Posterior vena cava (tissue), 2 donors: ENCODE measurements at regions of chr9 and their contacts with region 1.

Region 1: DNA sequence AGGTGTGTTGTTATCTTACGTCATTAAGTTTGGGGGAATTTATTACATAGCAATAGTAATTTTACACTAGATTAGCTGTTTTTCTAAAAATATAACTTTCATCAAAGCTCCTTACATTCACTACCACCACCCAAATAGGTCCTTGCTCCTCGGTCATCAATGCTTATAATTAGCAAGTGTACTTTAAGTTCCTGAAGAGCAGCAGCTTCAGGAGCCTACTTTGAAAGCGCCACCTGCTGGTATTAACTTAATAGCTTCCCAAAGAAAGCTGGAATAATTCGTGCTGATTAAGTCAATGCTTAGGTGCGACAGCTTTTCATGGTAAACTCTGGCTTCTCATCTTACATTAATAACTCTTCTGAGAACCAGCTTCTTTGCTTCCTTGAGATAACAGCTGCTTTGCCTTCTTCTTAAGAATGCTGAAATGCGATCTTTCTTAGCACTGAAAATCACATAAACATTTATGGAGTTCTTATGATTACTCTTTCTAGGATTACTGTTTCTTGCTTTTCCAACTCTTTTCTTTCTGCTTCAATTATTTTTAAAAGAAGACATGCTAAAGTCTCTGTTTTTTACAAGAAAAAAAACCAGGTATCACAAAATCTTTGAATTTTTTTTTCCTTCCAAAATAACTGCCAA is 10.0 kb upstream of the C5 start:
- DNase-seq: no peak

Region 2: DNA sequence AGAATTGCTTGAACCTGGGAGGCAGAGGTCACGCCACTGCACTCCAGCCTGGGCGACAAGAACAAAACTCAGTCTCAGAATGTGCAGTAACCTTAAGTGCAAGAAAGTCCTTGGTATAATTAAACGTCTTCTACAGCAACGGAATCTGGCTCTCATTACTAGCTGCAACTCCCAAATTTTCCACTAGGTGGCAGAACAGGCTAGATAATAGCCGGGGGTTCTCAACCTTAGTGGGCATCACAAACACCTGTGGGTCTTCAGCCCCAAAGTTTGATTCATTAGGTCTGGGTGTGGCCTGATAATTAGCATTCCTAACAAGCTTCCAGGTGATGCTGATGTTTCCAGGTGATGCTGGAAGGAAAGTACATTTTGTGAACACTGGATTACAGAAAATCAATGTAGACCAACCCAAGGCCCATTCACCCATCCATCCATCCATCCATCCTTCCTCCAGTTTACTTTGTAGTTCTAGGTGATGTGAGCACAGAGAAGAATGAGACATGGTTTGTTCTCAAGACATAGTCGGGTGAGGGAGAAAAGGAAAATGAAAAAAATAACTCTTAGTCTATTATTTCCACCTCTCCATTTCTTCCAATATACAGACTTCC is 304.2 kb before region 1 on chr9:
- intact Hi-C with region 1: loop called (anchors 5 to 10 kb)
- DNase-seq: no peak

Region 3: DNA sequence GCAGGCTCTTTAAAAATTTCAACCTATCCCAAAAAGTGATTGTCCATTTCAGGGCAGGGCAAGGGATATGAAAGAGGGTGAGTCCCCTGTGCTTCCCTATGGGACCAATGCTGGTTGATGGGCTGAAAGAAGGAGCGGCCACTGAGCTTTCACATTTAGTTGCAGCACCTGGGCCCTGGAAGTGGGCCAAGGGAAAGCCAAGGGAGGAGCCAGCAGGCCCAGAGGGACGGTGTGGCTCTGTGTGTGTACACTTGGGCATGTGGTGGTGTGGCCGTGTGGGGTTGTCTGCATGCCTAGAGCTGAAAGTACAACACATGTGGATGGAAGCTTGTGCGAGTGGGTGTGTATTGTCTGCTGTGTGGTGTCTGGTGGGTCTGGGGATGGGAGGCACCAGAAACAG is 203.4 kb before region 1 on chr9:
- intact Hi-C with region 1: loop called in 1 of 2 experiments (anchors 10 kb)
- DNase-seq: no peak